OCI-LY7 (cell line): ENCODE measurements at regions of chr12 and their contacts with region 1.

Region 1: GRCh38 chr12:42469355-42470175 is 120.0 kb downstream of the PRICKLE1 start:
- DNase-seq: peak; percentile 94
- H3K4me3 ChIP-seq: peak overlapping the region; percentile 55
- H3K27ac ChIP-seq: peak overlapping the region; percentile 80
- H3K4me1 ChIP-seq: peaks cover 42% of the 10 kb centered on the region
- CTCF ChIP-seq: no peak

Region 2: GRCh38 chr12:42017051-42017450 is 452.5 kb before region 1 on chr12:
- CTCF ChIA-PET with region 1: no interaction called
- POLR2A ChIA-PET with region 1: interaction called, 3 read pairs
- intact Hi-C with region 1: loop called (anchors 5 kb)
- DNase-seq: peak; percentile 77
- H3K4me3 ChIP-seq: peak overlapping the region; percentile 14
- H3K27ac ChIP-seq: peak overlapping the region; percentile 87
- H3K4me1 ChIP-seq: peaks cover 87% of the 10 kb centered on the region
- CTCF ChIP-seq: no peak

Region 3: GRCh38 chr12:42237052-42237852 is 232.3 kb before region 1 on chr12:
- CTCF ChIA-PET with region 1: no interaction called
- POLR2A ChIA-PET with region 1: no interaction called
- intact Hi-C with region 1: loop called (anchors 5 kb)
- DNase-seq: peak; percentile 90
- H3K4me3 ChIP-seq: peak overlapping the region; percentile 79
- H3K27ac ChIP-seq: peak overlapping the region; percentile 61
- H3K4me1 ChIP-seq: peaks cover 24% of the 10 kb centered on the region
- CTCF ChIP-seq: peak; percentile 67

Region 4: DNA sequence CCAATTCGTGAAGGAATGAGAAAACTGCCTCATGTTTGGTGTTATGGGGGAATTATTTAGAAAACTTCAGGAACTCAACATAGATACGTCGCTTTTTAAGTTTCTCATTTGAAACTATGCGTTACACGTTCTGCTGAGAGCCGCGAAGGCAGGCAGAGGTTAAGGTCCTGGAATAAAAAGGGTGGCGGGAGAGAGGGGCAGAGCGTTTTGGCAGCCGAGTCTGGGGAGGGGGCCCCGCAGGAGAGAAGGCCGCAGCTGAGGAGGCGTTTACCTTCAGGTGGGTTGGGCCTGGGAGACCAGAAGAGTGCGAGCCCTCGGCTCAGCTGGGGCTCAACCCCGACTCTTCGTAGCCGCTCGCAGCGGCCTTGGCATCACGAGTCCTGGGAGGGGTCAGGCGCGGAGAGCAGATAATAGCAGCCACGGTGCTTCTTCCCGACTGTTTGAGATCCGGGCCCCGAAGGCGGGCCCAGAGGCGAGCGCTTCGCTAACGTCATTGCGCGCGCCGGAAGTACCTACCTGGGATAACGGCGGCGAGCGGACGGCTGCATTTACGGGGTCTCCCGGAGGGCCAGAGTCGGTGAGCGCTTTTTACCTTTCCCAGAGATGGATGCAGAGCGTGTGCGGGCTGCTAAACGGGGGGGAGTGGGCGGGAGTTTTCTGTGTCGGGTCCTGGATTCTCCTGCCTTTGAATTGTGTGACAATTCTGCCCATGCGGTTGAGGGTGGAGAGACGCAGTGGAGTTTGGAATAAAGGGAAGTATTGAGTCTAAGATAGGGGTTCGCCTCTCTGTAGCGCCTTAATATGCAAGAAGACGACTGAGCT is 143.7 kb before region 1 on chr12 and contains the starts of genes PPHLN1 and ZCRB1:
- CTCF ChIA-PET with region 1: no interaction called
- POLR2A ChIA-PET with region 1: interaction called, 3 read pairs
- intact Hi-C with region 1: loop called (anchors 5 kb)
- DNase-seq: peak; percentile 89
- H3K4me3 ChIP-seq: peak within 1 kb of the TSS; percentile 95
- H3K27ac ChIP-seq: peak within 1 kb of the TSS; percentile 69
- H3K4me1 ChIP-seq: peaks cover 37% of the 10 kb centered on the region
- CTCF ChIP-seq: no peak
- total RNA-seq, gene PPHLN1: 97.6 and 115 TPM in 2 replicates
- total RNA-seq, gene ZCRB1: 25.7 and 29.7 TPM in 2 replicates

Region 5: DNA sequence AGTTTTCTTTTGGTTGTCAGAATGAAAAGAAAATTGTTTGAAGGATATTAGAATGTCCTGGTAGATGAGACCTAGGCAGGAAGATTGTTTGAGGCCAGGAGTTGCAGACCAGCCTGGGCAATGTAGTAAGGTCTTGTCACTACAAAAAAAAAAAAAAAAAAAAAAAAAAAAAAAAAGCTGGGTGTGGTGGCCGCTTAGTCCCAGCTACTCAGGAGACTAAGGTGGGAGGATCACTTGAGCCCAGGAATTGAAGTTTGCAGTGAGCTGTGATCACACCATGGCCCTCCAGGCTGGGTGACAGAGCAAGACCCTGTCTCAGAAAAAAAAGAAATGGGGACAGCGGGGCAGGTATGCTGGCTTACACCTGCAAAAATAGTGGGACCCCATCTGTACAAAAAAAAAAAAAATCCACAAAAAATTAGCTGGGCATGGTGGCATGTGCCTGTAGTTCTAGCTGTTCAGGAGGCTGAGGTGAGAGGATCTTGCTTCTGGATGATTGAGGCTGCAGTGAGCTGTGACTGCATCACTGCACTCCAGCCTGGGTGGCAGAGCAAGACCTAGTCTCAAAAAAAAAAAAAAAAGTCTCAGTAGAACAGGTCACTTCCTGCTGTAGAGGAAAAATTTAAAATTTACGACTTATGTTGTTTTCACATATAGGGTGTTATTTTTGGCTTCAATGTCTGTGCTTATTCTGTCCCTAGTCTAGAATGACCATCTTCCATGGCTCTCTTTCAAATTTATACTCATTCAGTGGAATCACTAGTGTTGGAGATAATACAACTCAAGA is 72.9 kb before region 1 on chr12:
- CTCF ChIA-PET with region 1: no interaction called
- POLR2A ChIA-PET with region 1: interaction called, 3 read pairs
- intact Hi-C with region 1: loop called (anchors 1 kb)
- DNase-seq: peak; percentile 36
- H3K4me3 ChIP-seq: no peak overlapping the region
- H3K27ac ChIP-seq: no peak overlapping the region
- H3K4me1 ChIP-seq: peaks cover 6% of the 10 kb centered on the region
- CTCF ChIP-seq: no peak